ENCODE measurements at regions of chr7 and their contacts with region 1.

Region 1: DNA sequence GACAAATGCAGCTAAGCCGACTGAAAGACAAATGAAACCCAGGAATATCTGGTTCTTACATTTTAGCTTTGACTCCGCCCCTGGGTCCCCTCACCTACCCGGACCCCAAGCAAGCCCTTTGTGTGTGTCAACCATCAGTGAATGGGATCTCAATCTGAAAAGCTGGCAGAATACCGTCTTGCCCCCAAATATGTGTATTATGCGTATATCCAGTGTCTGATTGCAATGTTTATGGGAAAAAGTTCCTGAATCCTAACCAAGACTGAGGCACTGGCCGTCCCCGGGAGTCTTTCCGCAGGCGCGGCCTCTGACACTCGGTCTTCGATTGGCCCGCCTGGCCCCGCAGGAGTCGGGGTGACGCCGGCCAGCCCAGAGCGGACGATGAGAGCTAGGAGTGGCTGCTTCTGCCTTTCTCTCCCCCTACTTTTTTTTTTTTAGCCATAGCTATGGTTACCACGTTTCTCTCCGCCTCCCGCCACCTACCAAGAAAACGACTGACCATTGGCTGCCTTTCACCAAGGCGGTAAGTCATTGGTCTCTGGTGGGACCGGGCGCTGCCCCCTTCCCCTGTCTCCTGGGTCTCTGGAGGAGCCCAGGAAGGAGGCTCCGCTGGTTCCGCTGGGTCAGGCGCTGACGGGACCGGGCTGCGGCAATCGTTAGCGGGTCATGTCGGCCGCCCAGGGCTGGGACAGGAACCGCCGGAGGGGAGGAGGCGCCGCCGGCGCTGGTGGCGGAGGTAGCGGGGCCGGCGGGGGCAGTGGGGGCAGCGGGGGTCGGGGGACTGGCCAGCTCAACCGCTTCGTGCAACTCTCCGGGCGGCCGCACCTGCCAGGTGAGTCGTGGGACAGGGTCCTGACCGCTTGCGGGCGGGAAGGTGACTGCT is at the start of gene KLHDC10:
- DNase-seq: peak; percentile 98
- H3K4me3 ChIP-seq: peak within 1 kb of the TSS; percentile 90
- H3K27ac ChIP-seq: peak within 1 kb of the TSS; percentile 78
- H3K4me1 ChIP-seq: peaks cover 22% of the 10 kb centered on the region
- H3K27me3 ChIP-seq: no peaks in the 10 kb centered on the region
- CTCF ChIP-seq: no peak
- total RNA-seq, gene KLHDC10: 46.4 and 47.0 TPM in 2 replicates

Region 2: GRCh38 chr7:129664029-129665012 is 405.9 kb before region 1 on chr7:
- CTCF ChIA-PET with region 1: no interaction called
- POLR2A ChIA-PET with region 1: no interaction called
- intact Hi-C with region 1: no loop called
- DNase-seq: peak; percentile 14 to 53
- H3K4me3 ChIP-seq: no peak overlapping the region
- H3K27ac ChIP-seq: peak overlapping the region; percentile 53
- H3K4me1 ChIP-seq: peaks cover 17% of the 10 kb centered on the region
- H3K27me3 ChIP-seq: no peaks in the 10 kb centered on the region
- CTCF ChIP-seq: peak; percentile 77

Region 3: DNA sequence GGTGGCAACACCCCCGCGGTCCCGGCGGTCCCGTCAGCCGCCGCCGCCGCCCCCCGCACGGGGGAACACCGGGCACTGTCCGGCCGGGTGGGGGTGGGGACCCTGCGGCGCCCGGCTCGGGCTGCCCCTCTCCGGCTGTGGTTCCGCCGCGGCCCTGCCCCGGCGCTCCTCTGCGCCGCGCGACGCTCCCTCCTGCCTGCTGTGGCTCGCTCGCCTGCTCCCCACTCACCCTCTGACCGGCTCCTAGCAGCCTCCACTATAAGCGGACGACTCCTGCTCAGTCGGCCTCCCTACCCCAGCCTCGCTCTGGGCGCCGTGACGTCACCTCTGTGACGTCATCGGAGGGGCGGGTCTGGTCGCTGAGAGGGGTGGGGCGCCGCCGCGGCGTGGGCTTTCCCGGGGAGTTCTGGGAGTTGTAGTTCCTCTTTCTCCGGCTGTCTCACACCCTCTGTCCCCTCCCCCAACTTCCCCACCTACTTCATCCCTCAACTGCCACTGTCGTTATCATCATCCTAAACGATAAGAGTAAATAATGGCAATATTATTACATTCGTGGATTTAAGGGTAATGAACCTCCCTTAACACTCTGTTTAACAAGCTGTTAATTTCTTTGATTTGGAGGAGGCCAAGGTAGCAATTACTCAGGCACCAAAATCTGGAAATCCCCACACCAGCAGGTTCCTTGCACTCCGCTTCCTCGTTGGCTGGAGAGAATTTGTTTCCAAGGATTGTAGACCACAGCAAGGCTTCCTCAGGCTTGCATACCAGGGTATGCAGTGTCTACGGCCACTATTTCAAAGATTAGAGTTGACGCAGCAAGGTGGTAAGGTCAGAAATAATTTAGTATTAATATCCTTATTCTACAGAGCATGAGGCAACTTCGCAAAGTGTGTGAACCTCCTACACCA is 117.3 kb before region 1 on chr7 and contains the start of gene UBE2H:
- CTCF ChIA-PET with region 1: no interaction called
- POLR2A ChIA-PET with region 1: no interaction called
- intact Hi-C with region 1: loop called (anchors 1 kb)
- DNase-seq: peak; percentile 68 to 89
- H3K4me3 ChIP-seq: peak within 1 kb of the TSS; percentile 76
- H3K27ac ChIP-seq: peak within 1 kb of the TSS; percentile 100
- H3K4me1 ChIP-seq: peaks cover 42% of the 10 kb centered on the region
- H3K27me3 ChIP-seq: no peaks in the 10 kb centered on the region
- CTCF ChIP-seq: no peak
- total RNA-seq, gene UBE2H: 211 TPM in 2 replicates

Region 4: DNA sequence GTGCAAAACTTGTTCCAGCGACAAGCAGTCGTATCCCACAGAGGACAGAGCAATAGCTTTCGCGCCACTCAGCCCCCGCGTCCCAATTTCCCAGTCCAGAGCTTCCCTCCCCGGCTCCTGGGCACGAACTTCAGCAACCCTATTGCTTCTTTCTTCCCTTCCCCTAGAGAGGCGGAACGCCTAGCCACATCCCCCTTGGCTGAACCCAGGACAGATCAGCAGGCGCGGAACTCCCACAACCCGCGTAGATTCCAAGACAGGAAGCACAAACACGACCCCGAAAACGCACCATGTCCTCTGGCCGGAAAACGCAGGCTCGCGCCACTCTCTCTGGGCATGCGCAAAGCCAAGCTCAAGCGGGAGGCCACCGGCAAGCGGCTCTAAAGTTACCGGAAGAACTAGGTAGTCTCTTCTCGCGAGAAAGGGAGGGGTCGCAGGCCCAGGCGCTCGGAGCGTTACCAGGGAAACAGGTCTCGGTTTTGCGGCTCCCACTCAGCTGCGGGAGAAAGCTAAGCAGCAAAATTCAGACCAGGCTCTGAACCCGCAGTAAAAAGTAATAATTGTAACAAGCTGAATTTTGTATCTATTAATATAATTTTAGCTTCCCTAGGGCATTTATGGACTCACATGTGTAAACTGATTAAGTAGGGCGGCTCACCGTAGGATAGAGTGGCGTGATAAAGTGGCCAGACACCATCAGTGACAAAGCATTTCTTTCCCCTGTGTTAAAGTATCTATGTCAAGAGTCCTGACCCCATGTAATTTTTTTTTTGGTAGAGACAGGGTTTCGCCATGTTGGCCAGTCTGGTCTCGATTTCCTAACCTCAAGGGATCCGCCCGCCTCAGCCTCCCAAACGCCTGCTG is 135.1 kb after region 1 on chr7 and contains the start of gene TMEM209:
- CTCF ChIA-PET with region 1: no interaction called
- POLR2A ChIA-PET with region 1: no interaction called
- intact Hi-C with region 1: loop called (anchors 2 kb)
- DNase-seq: peak; percentile 95 to 98
- H3K4me3 ChIP-seq: peak within 1 kb of the TSS; percentile 63
- H3K27ac ChIP-seq: peak within 1 kb of the TSS; percentile 84
- H3K4me1 ChIP-seq: peaks cover 23% of the 10 kb centered on the region
- H3K27me3 ChIP-seq: no peaks in the 10 kb centered on the region
- CTCF ChIP-seq: no peak
- total RNA-seq, gene TMEM209: 20.0 and 30.8 TPM in 2 replicates

Region 5: GRCh38 chr7:130486114-130486958 is 416.1 kb after region 1 on chr7:
- CTCF ChIA-PET with region 1: interaction called, 29 read pairs
- POLR2A ChIA-PET with region 1: no interaction called
- intact Hi-C with region 1: loop called (anchors 5 kb)
- DNase-seq: peak; percentile 83 to 86
- H3K4me3 ChIP-seq: peak overlapping the region; percentile 72
- H3K27ac ChIP-seq: peak overlapping the region; percentile 61
- H3K4me1 ChIP-seq: peaks cover 10% of the 10 kb centered on the region; the same call in 1 of the 2 replicates
- H3K27me3 ChIP-seq: no peaks in the 10 kb centered on the region
- CTCF ChIP-seq: peak; percentile 92

Region 6: DNA sequence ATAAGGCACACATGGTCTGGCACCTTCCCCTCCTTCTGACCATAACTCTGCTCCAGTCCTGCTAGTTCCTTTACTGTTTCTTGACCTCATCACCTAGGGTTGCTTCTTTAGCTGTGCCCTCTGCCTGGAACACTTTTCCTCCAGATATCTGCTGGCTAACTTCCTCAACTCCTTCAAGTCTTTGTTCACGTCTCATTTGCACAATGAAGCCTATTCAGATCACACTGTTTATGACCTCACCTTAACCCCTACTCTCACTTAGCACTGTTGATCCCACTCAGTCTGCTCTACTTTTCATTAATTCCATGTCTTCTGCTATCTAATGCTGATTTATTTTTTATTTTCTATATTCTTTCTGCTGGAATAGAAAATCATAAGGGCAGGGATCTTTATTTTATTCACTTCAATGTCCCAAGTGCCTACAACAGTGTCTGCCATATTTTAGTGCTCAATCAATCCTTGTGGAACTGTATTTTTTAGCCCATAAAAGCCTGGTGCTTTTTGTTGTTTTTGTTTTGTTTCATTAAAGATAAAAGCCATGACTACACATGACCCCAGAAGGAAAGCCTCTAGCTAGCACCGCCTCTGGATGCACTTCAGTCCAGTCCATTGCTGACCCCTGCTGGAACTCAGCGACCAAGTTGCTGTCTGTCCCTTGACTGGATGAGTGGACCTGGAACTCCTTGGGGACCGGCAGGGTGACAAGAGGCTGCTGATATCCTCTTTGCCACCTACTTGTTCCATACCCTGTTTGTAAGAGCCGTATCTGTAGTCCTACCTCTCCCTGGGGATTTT is 651.5 kb after region 1 on chr7:
- CTCF ChIA-PET with region 1: interaction called, 5 read pairs
- POLR2A ChIA-PET with region 1: no interaction called
- intact Hi-C with region 1: loop called (anchors 1 kb)
- DNase-seq: peak; percentile 64 to 65
- H3K4me3 ChIP-seq: no peak overlapping the region
- H3K27ac ChIP-seq: no peak overlapping the region
- H3K4me1 ChIP-seq: no peaks in the 10 kb centered on the region
- H3K27me3 ChIP-seq: no peaks in the 10 kb centered on the region
- CTCF ChIP-seq: peak; percentile 67

Measured in PC-9 (cell line).